ENCODE measurements at regions of chr11 and their contacts with region 1.

Region 1: GRCh38 chr11:130314750-130315285 is at the start of gene ZBTB44:
- DNase-seq: peak; percentile 77 to 91 (median 85)
- ATAC-seq: peak; percentile 94
- H3K4me3 ChIP-seq: peak within 1 kb of the TSS; percentile 68
- H3K4me3 Mint-ChIP-seq: peak within 1 kb of the TSS; percentile 90 to 99 (median 96)
- H3K27ac ChIP-seq: peak within 1 kb of the TSS; percentile 89
- H3K27ac Mint-ChIP-seq: peak within 1 kb of the TSS; percentile 93 to 99 (median 98)
- H3K4me1 ChIP-seq: peaks cover 8 to 16% of the 10 kb centered on the region in 2 donors
- H3K4me1 Mint-ChIP-seq: peaks cover 33 to 54% (median 40%) of the 10 kb centered on the region in 7 donors
- H3K27me3 ChIP-seq: no peaks in the 10 kb centered on the region
- H3K27me3 Mint-ChIP-seq: peaks cover 0 to 6% (median 0%) of the 10 kb centered on the region in 5 donors
- total RNA-seq, gene ZBTB44: 45.3 to 83.4 (median 53.5) TPM

Region 2: DNA sequence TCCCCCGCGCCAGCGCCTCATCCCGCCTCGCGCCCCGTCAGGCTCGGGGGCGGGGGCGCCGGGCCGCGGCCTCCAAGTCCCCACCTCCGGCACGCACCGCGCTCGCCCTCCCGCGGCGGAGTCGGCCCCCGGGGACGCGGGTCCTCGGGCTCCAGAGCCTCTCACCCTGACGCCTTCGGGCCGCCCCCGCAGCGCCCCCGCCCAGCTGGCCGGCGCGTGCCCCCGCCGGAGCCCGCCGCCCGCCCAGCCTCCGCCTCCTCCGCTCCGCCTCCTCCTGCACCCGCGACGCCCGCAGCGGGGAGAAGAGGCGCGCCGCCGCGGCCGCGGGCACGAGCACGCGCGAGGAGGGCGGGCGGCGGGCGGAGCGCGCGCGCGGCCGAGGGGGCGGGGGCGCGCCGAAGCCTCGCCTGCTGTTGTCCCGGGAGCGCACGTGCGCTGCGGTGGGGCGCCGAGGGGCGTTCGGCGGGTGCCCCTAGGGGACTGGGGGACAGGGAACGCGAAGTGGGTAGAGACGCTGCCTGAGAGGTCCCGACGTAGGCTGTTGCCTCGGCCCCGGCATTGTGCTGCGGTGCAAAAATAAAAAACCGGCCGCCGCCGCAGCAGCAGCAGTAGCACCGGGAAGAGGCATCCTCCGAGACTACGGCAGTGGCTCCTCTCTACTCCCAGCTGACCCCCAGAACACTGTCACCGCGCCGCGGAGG is 1035.3 kb before region 1 on chr11:
- CTCF ChIA-PET with region 1: no interaction called
- POLR2A ChIA-PET with region 1: no interaction called
- intact Hi-C with region 1: loop called in 1 of 2 experiments (anchors 2 kb)
- DNase-seq: peak; percentile 70 to 90 (median 82)
- ATAC-seq: peak; percentile 94
- H3K4me3 ChIP-seq: peak overlapping the region; percentile 58
- H3K4me3 Mint-ChIP-seq: peak overlapping the region; percentile 74 to 91 (median 86)
- H3K27ac ChIP-seq: peak overlapping the region; percentile 49
- H3K27ac Mint-ChIP-seq: peak overlapping the region; percentile 69 to 91 (median 80)
- H3K4me1 ChIP-seq: peaks cover 4 to 6% of the 10 kb centered on the region in 2 donors
- H3K4me1 Mint-ChIP-seq: peaks cover 14 to 43% (median 33%) of the 10 kb centered on the region in 7 donors
- H3K27me3 ChIP-seq: peaks cover 0 to 3% of the 10 kb centered on the region in 2 donors
- H3K27me3 Mint-ChIP-seq: peaks cover 8 to 32% (median 17%) of the 10 kb centered on the region in 5 donors

Region 3: GRCh38 chr11:129895126-129896041 is 419.4 kb before region 1 on chr11 and contains the start of gene NFRKB:
- CTCF ChIA-PET with region 1: no interaction called
- POLR2A ChIA-PET with region 1: no interaction called
- intact Hi-C with region 1: loop called (anchors 1 to 2 kb)
- DNase-seq: peak; percentile 75 to 95 (median 88)
- ATAC-seq: peak; percentile 99
- H3K4me3 ChIP-seq: peak within 1 kb of the TSS; percentile 76
- H3K4me3 Mint-ChIP-seq: peak within 1 kb of the TSS; percentile 86 to 96 (median 92)
- H3K27ac ChIP-seq: peak within 1 kb of the TSS; percentile 84
- H3K27ac Mint-ChIP-seq: peak within 1 kb of the TSS; percentile 82 to 95 (median 90)
- H3K4me1 ChIP-seq: peaks cover 9 to 18% of the 10 kb centered on the region in 2 donors
- H3K4me1 Mint-ChIP-seq: peaks cover 23 to 58% (median 44%) of the 10 kb centered on the region in 7 donors
- H3K27me3 ChIP-seq: no peaks in the 10 kb centered on the region
- H3K27me3 Mint-ChIP-seq: no peaks in the 10 kb centered on the region
- total RNA-seq, gene NFRKB: 40.4 to 81.3 (median 56.2) TPM

Region 4: DNA sequence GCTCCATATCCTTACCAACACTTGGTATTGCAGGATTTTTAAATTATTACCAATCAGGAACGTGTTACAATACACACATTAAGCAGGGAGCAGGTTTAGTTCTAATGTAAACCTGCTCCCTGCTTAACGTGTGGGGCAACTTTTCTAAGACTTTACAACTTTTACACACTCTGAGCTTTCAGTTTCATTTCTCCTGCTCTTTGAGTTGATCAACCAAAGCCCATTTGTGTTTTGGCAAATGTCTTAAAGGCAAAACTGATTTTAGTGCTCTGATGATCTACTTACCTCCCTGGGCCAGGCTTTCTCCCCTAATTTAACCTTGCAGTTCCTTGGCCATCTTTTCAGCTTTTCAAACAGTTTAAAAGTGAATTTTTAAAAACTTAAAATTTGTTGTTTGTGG is 71.0 kb before region 1 on chr11:
- CTCF ChIA-PET with region 1: no interaction called
- POLR2A ChIA-PET with region 1: no interaction called
- intact Hi-C with region 1: loop called (anchors 2 to 5 kb)
- DNase-seq: peak in 1 of 9 donors; percentile 3
- ATAC-seq: no peak
- H3K4me3 ChIP-seq: no peak overlapping the region
- H3K4me3 Mint-ChIP-seq: peak overlapping the region in 2 of 10 donors; percentile 21 to 30
- H3K27ac ChIP-seq: no peak overlapping the region
- H3K27ac Mint-ChIP-seq: peak overlapping the region in 4 of 9 donors; percentile 32 to 84 (median 68)
- H3K4me1 ChIP-seq: peaks cover 0 to 4% of the 10 kb centered on the region in 2 donors
- H3K4me1 Mint-ChIP-seq: peaks cover 18 to 58% (median 49%) of the 10 kb centered on the region in 7 donors
- H3K27me3 ChIP-seq: no peaks in the 10 kb centered on the region
- H3K27me3 Mint-ChIP-seq: no peaks in the 10 kb centered on the region

Region 5: GRCh38 chr11:130359419-130359818 is 44.6 kb after region 1 on chr11:
- CTCF ChIA-PET with region 1: no interaction called
- POLR2A ChIA-PET with region 1: no interaction called
- intact Hi-C with region 1: loop called in 1 of 2 experiments (anchors 5 kb)
- DNase-seq: no peak
- ATAC-seq: no peak
- H3K4me3 ChIP-seq: no peak overlapping the region
- H3K4me3 Mint-ChIP-seq: no peak overlapping the region
- H3K27ac ChIP-seq: no peak overlapping the region
- H3K27ac Mint-ChIP-seq: no peak overlapping the region
- H3K4me1 ChIP-seq: no peaks in the 10 kb centered on the region
- H3K4me1 Mint-ChIP-seq: peaks cover 0 to 3% (median 0%) of the 10 kb centered on the region in 7 donors
- H3K27me3 ChIP-seq: no peaks in the 10 kb centered on the region
- H3K27me3 Mint-ChIP-seq: peaks cover 0 to 9% (median 0%) of the 10 kb centered on the region in 5 donors

Region 6: DNA sequence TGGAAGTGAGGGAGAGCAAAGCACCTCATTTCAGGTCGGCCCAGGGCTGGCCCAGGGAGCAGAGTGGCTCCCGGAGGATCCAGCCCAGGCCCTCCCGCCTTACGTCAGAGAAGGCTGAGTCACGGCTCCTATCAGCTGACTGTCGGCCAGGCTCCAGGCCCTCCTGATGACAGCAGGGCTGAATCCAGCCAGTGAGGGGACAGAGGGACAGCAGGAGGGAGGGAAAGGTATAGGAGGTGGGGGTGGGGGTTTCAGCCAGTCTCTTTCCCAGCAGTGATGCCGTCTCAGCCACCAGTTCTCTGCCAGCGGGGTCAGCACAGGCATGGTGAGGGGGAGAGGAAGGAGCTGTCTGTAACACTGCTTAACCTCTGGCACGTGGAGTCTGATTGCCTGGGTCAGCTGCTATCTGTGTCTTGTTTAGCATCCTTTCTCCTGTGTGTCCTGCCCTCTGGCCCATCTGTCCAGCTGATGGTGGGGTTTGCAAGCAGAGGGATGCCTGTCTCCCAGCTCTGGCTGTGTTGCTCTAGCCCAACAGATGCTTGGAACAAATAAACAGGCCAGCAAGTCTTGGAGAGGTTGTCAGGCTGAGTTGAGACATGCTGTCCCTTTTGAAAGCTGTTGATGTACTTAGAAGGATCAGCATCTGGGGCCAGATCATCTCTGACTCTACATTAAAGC is 207.6 kb after region 1 on chr11:
- CTCF ChIA-PET with region 1: no interaction called
- POLR2A ChIA-PET with region 1: no interaction called
- intact Hi-C with region 1: no loop called
- DNase-seq: no peak
- ATAC-seq: no peak
- H3K4me3 ChIP-seq: no peak overlapping the region
- H3K4me3 Mint-ChIP-seq: no peak overlapping the region
- H3K27ac ChIP-seq: no peak overlapping the region
- H3K27ac Mint-ChIP-seq: no peak overlapping the region
- H3K4me1 ChIP-seq: no peaks in the 10 kb centered on the region
- H3K4me1 Mint-ChIP-seq: no peaks in the 10 kb centered on the region
- H3K27me3 ChIP-seq: no peaks in the 10 kb centered on the region
- H3K27me3 Mint-ChIP-seq: peaks cover 0 to 5% (median 0%) of the 10 kb centered on the region in 5 donors

Region 7: DNA sequence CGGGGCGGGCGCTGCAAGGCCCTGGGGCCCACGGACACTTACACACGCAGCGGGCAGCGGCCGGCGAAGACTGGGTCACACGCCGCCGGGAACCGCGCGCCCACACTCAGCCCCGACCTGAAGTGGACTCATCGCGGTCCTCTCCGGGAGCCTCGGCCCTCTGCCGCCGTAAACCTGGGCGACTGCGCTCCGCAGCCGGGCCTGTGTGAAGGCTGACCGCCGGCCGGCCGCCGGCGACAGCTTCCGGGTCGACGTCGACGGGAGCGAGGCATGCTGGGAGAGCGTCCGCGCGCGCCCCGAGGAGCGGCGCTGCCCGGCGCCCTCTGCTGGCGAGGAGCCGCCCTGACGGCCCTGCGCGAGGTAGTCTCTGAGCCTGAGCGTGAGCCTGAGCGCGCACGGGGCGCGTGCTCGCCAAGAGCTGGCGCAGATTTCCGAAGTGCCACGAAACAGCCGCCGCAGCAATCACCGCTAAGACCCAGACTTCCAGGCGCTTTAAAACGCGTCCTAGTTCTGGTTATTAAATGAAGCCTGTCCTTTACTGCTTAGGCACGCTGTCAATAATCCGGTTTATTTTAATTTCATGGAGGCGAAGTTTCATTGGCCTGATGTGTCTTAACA is 601.5 kb after region 1 on chr11 and contains the start of gene SNX19:
- CTCF ChIA-PET with region 1: no interaction called
- POLR2A ChIA-PET with region 1: interaction called, 6 read pairs
- intact Hi-C with region 1: loop called (anchors 1 kb)
- DNase-seq: peak; percentile 83 to 96 (median 89)
- ATAC-seq: peak; percentile 100
- H3K4me3 ChIP-seq: peak within 1 kb of the TSS; percentile 54
- H3K4me3 Mint-ChIP-seq: peak within 1 kb of the TSS; percentile 83 to 91 (median 88)
- H3K27ac ChIP-seq: peak within 1 kb of the TSS; percentile 84
- H3K27ac Mint-ChIP-seq: peak within 1 kb of the TSS; percentile 85 to 95 (median 92)
- H3K4me1 ChIP-seq: peaks cover 9 to 16% of the 10 kb centered on the region in 2 donors
- H3K4me1 Mint-ChIP-seq: peaks cover 5 to 53% (median 40%) of the 10 kb centered on the region in 7 donors
- H3K27me3 ChIP-seq: no peaks in the 10 kb centered on the region
- H3K27me3 Mint-ChIP-seq: peaks cover under 1 to 12% (median 10%) of the 10 kb centered on the region in 5 donors
- total RNA-seq, gene SNX19: 53.9 to 101 (median 57.1) TPM